HEK293T (cell line): ENCODE measurements at regions of chr18 and their contacts with region 1.

Region 1: DNA sequence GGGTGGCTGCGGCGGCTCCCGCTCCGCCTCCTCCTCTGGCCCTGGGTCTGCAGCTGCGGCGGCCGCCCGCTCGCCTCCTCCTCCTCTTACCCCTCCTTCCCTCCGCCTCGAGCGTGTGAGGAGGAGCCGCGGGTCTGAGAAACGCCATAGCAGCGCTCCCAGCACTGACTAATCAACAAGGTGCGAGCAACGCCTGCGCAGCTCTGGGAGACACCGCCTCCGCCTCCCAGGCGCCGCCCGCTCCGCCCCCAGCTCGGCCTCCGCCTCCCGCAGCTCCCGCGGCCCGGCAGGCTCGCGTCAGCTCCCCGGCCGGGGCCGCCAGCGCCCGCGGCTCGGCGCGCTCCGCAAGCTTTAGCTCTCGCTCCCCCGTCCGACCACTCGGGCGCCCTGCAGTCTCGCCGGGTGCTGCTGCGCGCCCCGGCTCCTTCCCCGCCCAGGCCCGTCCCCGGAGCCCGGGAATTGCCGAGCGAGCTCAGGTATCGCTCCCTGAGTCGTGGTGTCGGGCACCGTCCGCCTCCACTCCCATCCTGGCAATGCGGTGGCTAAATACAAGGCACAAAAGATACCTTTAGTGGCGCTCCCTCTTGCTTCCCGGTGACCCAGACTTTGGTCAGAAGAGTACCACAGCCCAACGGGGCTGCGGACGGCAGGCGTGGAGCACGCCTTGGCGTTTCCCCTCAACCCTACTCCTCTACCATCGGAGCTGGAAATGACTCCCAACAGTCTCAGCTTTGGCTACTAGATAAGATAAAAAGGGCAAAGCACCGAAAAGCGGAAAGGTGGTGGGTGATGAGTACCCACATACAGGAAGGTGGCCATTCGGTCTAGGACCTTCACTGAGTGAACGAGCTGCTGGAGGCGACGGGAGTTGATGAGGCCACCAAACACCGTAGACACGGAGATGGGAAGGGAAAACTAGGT is at the start of gene GAREM1:
- DNase-seq: peak; percentile 99

Region 2: DNA sequence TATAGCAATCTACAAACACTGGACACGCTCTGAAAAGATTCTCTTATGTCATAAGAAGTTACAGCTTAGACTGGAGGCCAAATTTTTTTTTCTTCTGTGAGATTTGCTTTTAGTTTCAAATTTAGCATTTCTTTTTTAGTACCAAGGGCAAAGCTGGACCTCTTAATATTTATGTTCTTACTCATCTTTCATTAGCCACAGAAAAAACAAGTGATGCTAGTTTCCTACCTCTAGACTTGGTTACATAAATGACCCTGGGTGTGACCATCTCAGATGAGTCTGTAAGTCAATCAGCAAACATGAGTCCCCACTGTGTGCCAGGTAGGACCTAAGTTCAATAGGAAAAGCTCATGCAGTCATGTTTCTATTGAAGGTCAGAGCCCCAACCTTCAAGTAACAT is 186.7 kb before region 1 on chr18:
- CTCF ChIA-PET with region 1: interaction called, 42 read pairs
- POLR2A ChIA-PET with region 1: interaction called, 19 read pairs
- DNase-seq: no peak

Region 3: GRCh38 chr18:32333781-32334180 is 137.2 kb before region 1 on chr18:
- CTCF ChIA-PET with region 1: interaction called, 4 read pairs
- POLR2A ChIA-PET with region 1: interaction called, 13 read pairs
- DNase-seq: no peak

Region 4: DNA sequence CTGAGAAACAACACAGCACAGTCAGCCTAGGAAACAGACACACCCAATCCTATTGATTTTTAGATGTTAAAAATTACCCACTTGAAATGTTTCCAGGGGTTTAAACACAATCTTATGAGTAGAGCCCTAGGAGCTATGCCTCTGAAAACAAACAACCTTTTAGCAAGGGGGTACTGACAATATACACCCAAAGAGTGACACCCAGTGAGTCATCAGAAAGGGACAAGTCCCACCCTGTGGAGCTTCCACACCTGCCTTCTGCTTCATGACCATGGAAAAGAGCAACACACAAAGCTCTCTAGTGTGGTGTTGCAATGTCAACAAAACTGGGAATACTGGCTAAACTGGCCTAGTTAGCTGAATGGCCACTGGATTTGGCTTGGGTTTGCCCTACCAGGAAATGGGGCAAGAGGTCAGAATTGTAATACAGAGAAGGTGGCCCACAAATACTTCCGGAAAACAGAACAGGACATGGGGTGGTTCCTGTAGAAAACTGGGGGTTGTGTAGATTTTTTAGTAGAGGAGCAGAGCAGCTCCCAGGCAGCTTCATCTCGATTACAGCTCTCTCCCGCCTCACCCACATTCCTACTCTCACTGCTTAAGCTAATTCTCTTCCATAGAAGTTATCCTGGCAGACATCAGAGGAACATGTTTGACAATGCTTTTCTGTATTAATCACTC is 98.5 kb before region 1 on chr18:
- CTCF ChIA-PET with region 1: no interaction called
- POLR2A ChIA-PET with region 1: interaction called, 12 read pairs
- DNase-seq: no peak

Region 5: DNA sequence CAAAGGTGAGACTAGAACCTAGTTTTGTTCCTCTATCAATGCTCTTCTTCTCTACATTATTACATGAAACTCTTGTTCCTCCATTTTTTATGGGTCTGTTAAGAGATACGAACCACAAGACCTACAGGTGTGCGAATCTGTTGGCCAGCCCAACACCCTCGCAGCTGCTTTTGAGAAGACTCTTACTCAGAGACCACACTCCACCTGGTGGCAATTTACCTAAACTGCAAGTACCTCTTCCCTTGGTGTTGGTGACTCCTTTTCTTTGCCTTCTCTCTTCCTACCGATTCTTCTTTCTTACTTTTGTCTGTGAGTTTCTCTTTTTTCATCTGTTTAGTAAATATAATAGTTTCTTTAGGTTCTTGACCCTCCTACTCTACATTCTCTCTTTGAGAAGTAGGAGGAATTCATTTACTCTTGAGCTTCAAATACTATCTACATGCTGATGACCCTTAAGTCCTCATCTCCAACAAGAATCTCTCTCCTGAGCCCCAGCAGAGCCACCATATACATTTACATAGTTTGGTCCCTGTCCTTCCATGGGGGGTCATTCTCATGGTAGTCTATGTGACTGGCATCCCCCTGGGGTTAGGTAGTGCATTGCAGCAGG is 81.6 kb after region 1 on chr18:
- CTCF ChIA-PET with region 1: interaction called, 12 read pairs
- POLR2A ChIA-PET with region 1: interaction called, 9 read pairs
- DNase-seq: peak; percentile 85